GM12878 (cell line): ENCODE measurements at regions of chr1 and their contacts with region 1.

Region 1: GRCh38 chr1:111507411-111508201 is 4.2 kb upstream of the ADORA3 start:
- DNase-seq: peak; percentile 82
- ATAC-seq: peak; percentile 79
- H3K4me3 ChIP-seq: peak overlapping the region; percentile 69
- H3K27ac ChIP-seq: peak overlapping the region; percentile 99
- H3K4me1 ChIP-seq: peaks cover 58% of the 10 kb centered on the region
- H3K27me3 ChIP-seq: no peaks in the 10 kb centered on the region
- CTCF ChIP-seq: peak in 2 of 3 experiments; percentile 15 to 32; a peak in 1 of 6 replicates
- EP300 ChIP-seq: peak in 1 of 2 experiments; percentile 73; a peak in 2 of 4 replicates
- POLR2A ChIP-seq: peak; percentile 62
- RAD21 ChIP-seq: no peak

Region 2: DNA sequence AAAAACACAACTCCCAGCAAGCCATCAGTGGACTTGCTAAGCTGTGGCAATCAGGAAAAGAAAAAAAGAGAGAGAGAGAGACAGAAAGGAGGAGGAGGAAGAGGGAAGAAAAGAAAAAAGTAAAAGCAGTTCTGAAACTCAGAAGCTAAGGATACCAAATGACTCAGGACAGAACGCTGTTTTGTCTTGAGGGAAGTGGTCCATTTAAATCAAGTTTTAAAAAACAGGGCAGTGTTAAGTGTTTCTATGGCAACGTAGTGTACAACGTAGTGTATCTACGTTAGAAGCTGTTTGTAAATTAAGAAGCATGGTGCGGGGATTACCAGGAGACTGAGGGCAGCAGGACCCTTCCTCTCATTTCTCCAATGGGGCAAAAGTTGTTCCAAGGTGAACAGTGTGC is 10.0 kb before region 1 on chr1:
- CTCF ChIA-PET with region 1: interaction called, 41 read pairs
- POLR2A ChIA-PET with region 1: interaction called, 5 read pairs
- RAD21 ChIA-PET with region 1: interaction called, 14 read pairs
- SMC1A ChIA-PET with region 1: interaction called, 46 read pairs
- in situ Hi-C with region 1: no loop called
- intact Hi-C with region 1: no loop called
- DNase-seq: no peak
- ATAC-seq: no peak; the same call in 2 of the 3 replicates
- H3K4me3 ChIP-seq: no peak overlapping the region
- H3K27ac ChIP-seq: no peak overlapping the region
- H3K4me1 ChIP-seq: peaks cover 16% of the 10 kb centered on the region; the same call in 1 of the 2 replicates
- H3K27me3 ChIP-seq: no peaks in the 10 kb centered on the region
- CTCF ChIP-seq: no peak
- EP300 ChIP-seq: no peak; a peak in 1 of 4 replicates
- POLR2A ChIP-seq: no peak
- RAD21 ChIP-seq: no peak

Region 3: DNA sequence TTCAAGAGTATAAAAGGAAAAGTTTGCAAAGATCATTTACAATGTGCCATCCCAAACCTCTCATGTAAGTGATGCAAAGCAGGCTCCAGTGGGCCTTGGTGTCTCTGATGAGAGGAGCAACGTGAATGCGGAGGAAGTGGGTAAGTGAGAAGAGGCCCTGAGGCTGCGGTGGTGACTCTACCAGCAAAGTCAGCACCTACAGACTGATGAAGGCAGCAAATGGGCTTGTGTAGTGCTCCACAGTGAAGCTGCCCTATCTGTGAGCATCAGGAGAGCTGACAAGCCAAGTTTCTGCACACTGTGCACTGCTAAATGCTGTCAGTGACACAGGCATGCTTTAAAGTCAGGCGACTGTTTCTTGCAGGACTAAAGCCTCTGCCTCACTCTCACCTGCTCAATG is 96.4 kb after region 1 on chr1:
- CTCF ChIA-PET with region 1: interaction called, 46 read pairs
- POLR2A ChIA-PET with region 1: interaction called, 4 read pairs
- RAD21 ChIA-PET with region 1: interaction called, 74 read pairs
- SMC1A ChIA-PET with region 1: interaction called, 67 read pairs
- in situ Hi-C with region 1: loop called (anchors 10 kb)
- intact Hi-C with region 1: loop called (anchors 2 kb)
- DNase-seq: no peak
- ATAC-seq: peak; percentile 56
- H3K4me3 ChIP-seq: no peak overlapping the region
- H3K27ac ChIP-seq: peak overlapping the region; percentile 98
- H3K4me1 ChIP-seq: peaks cover 54% of the 10 kb centered on the region
- H3K27me3 ChIP-seq: no peaks in the 10 kb centered on the region
- CTCF ChIP-seq: no peak
- EP300 ChIP-seq: no peak
- POLR2A ChIP-seq: peak; percentile 70
- RAD21 ChIP-seq: no peak

Region 4: GRCh38 chr1:111656086-111657017 is 148.7 kb after region 1 on chr1:
- CTCF ChIA-PET with region 1: interaction called, 33 read pairs
- POLR2A ChIA-PET with region 1: interaction called, 14 read pairs
- RAD21 ChIA-PET with region 1: interaction called, 18 read pairs
- SMC1A ChIA-PET with region 1: interaction called, 25 read pairs
- in situ Hi-C with region 1: no loop called
- intact Hi-C with region 1: loop called (anchors 1 kb)
- DNase-seq: no peak
- ATAC-seq: no peak
- H3K4me3 ChIP-seq: no peak overlapping the region
- H3K27ac ChIP-seq: no peak overlapping the region
- H3K4me1 ChIP-seq: peaks cover 21% of the 10 kb centered on the region
- H3K27me3 ChIP-seq: no peaks in the 10 kb centered on the region
- CTCF ChIP-seq: peak; percentile 28 to 54 (median 52); a peak in 5 of 6 replicates
- EP300 ChIP-seq: no peak
- POLR2A ChIP-seq: no peak
- RAD21 ChIP-seq: peak; percentile 83

Region 5: DNA sequence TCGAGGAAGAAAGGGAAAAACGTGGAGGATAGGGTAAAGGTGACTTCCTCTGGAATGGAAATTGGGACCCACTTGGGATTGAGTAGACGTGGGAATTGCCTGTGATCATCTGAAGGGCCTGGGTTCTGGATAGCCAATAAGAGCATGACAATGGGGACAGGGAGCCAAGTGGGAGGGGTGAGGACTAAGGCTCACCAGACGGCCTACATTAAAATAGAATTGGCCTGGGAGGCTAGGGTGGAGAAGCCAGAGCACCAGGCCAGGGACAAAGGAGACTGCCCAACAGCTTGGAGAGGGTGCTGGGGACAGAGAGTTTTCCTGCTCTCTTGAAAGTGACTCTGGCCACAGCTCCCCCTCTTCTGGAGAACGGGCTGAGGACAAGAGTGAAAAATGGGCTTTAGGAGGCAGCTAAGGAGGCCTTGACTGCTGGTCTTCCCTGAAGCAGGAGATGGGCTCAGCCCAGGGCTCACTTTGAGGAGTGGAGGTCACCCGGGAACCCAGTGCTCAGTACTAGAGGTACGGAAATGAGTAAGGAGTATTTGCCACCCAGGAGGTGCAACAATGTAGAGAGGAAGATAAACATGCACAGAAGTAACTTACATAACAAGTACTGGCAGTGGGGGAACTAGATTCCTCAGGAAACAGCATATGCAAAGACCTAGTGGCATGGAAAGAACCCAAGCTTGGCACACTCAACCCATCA is 212.8 kb after region 1 on chr1:
- CTCF ChIA-PET with region 1: interaction called, 62 read pairs
- POLR2A ChIA-PET with region 1: no interaction called
- RAD21 ChIA-PET with region 1: interaction called, 4 read pairs
- SMC1A ChIA-PET with region 1: interaction called, 87 read pairs
- in situ Hi-C with region 1: no loop called
- intact Hi-C with region 1: no loop called
- DNase-seq: no peak
- ATAC-seq: no peak
- H3K4me3 ChIP-seq: no peak overlapping the region
- H3K27ac ChIP-seq: no peak overlapping the region
- H3K4me1 ChIP-seq: no peaks in the 10 kb centered on the region
- H3K27me3 ChIP-seq: no peaks in the 10 kb centered on the region
- CTCF ChIP-seq: no peak
- EP300 ChIP-seq: no peak
- POLR2A ChIP-seq: no peak
- RAD21 ChIP-seq: no peak

Region 6: GRCh38 chr1:111769517-111770146 is 262.0 kb after region 1 on chr1:
- CTCF ChIA-PET with region 1: interaction called, 62 read pairs
- POLR2A ChIA-PET with region 1: interaction called, 3 read pairs
- RAD21 ChIA-PET with region 1: interaction called, 58 read pairs
- SMC1A ChIA-PET with region 1: interaction called, 43 read pairs
- in situ Hi-C with region 1: no loop called
- intact Hi-C with region 1: no loop called
- DNase-seq: peak; percentile 44
- ATAC-seq: peak; percentile 79
- H3K4me3 ChIP-seq: no peak overlapping the region
- H3K27ac ChIP-seq: no peak overlapping the region
- H3K4me1 ChIP-seq: no peaks in the 10 kb centered on the region
- H3K27me3 ChIP-seq: no peaks in the 10 kb centered on the region
- CTCF ChIP-seq: peak; percentile 66 to 87 (median 78)
- EP300 ChIP-seq: no peak
- POLR2A ChIP-seq: no peak
- RAD21 ChIP-seq: peak; percentile 92